Left ventricle myocardium inferior (tissue), 1 donor: ENCODE measurements at regions of chr10 and their contacts with region 1.

Region 1: DNA sequence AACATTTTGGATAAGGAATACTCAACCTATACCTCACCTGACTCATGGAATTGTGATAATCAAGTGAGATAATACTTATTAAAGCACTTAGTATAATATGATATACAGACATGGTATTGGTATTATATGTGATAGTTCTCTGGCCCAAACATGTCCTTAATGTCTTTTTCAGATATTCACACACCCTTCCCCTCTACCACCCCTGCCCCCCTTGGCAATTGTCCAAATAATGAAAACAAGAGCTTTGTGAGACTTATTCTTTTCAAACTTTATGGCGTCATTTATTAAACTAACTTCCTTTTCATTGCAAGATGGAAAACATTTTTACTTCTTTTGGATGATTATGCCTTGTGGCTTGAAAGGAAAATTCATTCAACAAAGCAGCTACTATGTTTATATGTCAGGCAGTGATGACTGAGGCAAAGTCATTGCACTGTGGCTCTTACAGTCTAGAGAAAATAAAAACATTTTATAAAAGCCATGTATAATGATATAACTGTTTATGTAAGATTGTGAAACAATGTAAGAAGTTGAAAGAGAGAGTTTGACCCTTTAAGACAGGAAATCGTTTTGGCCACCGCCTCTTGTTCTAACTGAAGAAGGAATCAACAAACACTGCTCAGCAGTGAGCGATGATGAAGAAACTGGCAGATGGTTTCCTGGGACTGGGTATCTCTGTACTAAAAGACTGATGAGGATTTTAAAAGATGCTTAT is 27.4 kb downstream of the MINPP1 start:
- DNase-seq: no peak
- H3K4me3 ChIP-seq: peak overlapping the region; percentile 35
- H3K27ac ChIP-seq: peak overlapping the region; percentile 80
- H3K4me1 ChIP-seq: peaks cover 26% of the 10 kb centered on the region
- H3K27me3 ChIP-seq: no peaks in the 10 kb centered on the region
- CTCF ChIP-seq: no peak

Region 2: GRCh38 chr10:87715552-87716347 is 183.7 kb after region 1 on chr10:
- intact Hi-C with region 1: no loop called
- DNase-seq: no peak
- H3K4me3 ChIP-seq: no peak overlapping the region
- H3K27ac ChIP-seq: peak overlapping the region; percentile 73
- H3K4me1 ChIP-seq: peaks cover 40% of the 10 kb centered on the region
- H3K27me3 ChIP-seq: no peaks in the 10 kb centered on the region
- CTCF ChIP-seq: no peak

Region 3: DNA sequence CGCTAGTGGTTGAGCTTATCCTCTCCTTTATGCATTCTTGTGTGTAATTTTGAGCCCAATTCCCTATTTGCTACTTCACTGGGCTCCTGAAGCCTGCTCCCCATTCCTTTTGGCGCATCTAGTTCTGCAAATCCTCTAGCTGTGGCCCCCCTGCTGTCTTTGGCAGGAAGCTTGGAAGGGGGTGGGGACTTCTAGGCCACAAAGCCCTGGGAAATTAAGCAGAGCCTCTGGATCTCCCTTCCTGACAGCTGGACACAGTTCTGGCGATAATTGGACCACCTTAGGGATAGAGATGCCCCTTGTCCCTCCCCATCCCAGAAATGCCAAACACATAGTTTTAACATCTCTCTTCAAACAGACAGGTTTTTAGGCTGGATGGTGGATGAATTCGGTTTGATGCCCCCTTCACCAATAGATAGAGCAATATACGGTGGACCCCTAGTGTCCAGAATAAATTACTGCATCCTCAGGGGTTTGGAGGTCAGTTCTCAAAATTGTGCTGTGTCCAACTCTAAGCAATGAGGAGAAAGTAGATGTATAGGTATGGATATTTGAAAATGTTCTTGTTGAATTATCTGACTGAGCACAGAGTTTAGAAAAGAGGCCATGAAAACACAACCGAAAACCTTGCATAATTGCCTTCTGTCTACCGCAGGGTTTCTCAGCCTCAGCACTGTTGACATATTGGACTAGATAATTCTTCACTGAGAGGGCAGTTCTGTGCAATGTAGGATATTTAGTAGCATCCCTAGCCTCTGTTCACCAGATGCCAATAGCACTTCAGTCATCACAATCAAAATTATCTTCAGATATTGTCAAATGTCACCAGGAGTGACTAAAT is 203.1 kb after region 1 on chr10:
- intact Hi-C with region 1: loop called (anchors 10 kb)
- DNase-seq: no peak
- H3K4me3 ChIP-seq: peak overlapping the region; percentile 7
- H3K27ac ChIP-seq: no peak overlapping the region
- H3K4me1 ChIP-seq: peaks cover 13% of the 10 kb centered on the region
- H3K27me3 ChIP-seq: no peaks in the 10 kb centered on the region
- CTCF ChIP-seq: peak; percentile 88